Right cardiac atrium (tissue), 5 donors: ENCODE measurements at regions of chr2 and their contacts with region 1.

Region 1: DNA sequence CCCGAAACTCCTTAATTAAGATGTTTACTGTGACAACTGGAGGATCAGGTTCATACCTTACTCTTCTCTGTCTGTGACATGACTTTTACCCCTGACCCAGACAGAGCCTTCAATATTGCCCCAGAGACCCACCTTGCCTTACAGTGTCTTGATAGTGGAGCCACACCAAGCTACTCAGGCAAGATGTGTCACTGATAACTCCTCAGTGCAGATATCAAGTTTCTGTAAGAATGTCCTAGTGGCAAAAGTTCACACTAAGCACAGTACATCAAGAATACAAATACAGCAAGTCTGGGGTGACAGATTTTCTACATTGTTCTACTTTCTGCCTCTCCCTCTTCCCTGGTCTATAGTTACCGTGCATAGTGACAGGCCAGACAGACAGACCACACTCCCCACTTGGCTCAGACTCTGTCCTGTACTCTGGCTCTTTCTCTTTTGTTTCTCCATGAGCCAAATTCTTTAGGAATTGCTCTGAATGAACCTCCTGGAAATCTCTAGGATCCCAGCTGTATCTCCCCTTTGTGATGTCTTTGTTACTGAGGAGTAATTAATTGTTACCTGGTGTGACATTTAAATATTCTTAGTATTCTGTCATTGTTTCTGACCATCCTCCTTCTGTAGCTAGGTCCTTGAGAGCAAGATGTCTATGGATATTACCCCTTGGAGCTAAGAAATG is 24.1 kb upstream of the APOB start:
- DNase-seq: no peak
- ATAC-seq: no peak
- H3K4me3 ChIP-seq: no peak overlapping the region
- H3K27ac ChIP-seq: no peak overlapping the region
- H3K4me1 ChIP-seq: no peaks in the 10 kb centered on the region
- H3K27me3 ChIP-seq: no peaks in the 10 kb centered on the region

Region 2: GRCh38 chr2:21203976-21204375 is 136.0 kb after region 1 on chr2:
- intact Hi-C with region 1: loop called in 1 of 4 experiments (anchors 10 kb)
- DNase-seq: no peak
- ATAC-seq: no peak
- H3K4me3 ChIP-seq: no peak overlapping the region
- H3K27ac ChIP-seq: no peak overlapping the region
- H3K4me1 ChIP-seq: no peaks in the 10 kb centered on the region
- H3K27me3 ChIP-seq: no peaks in the 10 kb centered on the region

Region 3: GRCh38 chr2:21289989-21290388 is 222.0 kb after region 1 on chr2:
- intact Hi-C with region 1: loop called in 1 of 4 experiments (anchors 10 kb)
- DNase-seq: peak in 2 of 3 donors; percentile 57 to 63
- ATAC-seq: peak; percentile 84 to 90
- H3K4me3 ChIP-seq: no peak overlapping the region
- H3K27ac ChIP-seq: no peak overlapping the region
- H3K4me1 ChIP-seq: no peaks in the 10 kb centered on the region
- H3K27me3 ChIP-seq: no peaks in the 10 kb centered on the region